Kidney (tissue), 22 donors: ENCODE measurements at regions of chr11 and their contacts with region 1.

Region 1: DNA sequence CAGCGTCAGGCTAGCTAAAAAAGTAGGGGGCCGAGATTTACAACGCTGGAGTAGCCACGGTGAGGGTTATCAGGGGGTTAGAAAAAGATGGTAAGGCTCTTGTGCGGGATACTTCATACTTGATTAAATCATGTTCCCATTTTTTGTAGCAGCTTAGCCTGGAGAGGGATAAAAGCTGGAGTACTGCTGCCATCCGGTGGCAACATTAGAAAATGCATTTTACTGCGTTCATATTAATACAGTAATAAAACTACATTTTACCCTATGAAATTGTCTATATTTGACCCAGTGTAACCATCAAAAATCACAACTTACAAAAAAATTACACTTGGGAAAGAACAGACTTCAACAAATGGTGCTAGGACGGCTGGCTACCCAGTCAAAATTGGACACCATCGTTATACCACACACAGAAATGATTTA is 17.3 kb downstream of the RPUSD4 start:
- DNase-seq: peak in 3 of 5 donors; percentile 48 to 69 (median 67)
- H3K4me3 ChIP-seq: no peak overlapping the region
- H3K27ac ChIP-seq: no peak overlapping the region
- H3K4me1 ChIP-seq: no peaks in the 10 kb centered on the region
- H3K27me3 ChIP-seq: no peaks in the 10 kb centered on the region
- CTCF ChIP-seq: peak; percentile 77

Region 2: GRCh38 chr11:125923012-125923579 is 271.0 kb before region 1 on chr11:
- intact Hi-C with region 1: loop called (anchors 5 kb)
- DNase-seq: peak in 4 of 5 donors; percentile 66 to 91 (median 78)
- H3K4me3 ChIP-seq: no peak overlapping the region
- H3K27ac ChIP-seq: no peak overlapping the region
- H3K4me1 ChIP-seq: no peaks in the 10 kb centered on the region
- H3K27me3 ChIP-seq: no peaks in the 10 kb centered on the region
- CTCF ChIP-seq: peak; percentile 82

Region 3: DNA sequence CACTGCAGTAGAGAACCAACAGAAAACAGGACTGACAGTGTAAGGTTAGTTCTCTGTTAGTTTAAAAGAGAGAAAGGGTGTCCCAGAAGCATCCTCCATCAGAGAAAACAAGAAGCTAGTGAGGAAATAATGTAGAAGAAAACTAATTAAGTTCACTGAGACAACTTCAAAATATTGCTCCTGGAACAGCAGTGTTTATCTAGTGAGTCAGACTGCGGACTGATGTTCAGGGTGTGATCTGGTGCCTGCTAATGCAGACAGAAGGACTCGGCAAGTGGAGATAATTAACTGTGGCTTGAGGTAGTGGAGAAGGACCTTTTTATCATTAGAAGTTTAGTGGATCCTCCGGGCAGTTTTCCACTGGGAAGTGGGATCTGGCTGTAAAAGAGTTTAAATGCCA is 186.9 kb before region 1 on chr11:
- intact Hi-C with region 1: no loop called
- DNase-seq: peak in 1 of 5 donors; percentile 14
- H3K4me3 ChIP-seq: no peak overlapping the region
- H3K27ac ChIP-seq: no peak overlapping the region
- H3K4me1 ChIP-seq: no peaks in the 10 kb centered on the region
- H3K27me3 ChIP-seq: no peaks in the 10 kb centered on the region
- CTCF ChIP-seq: no peak

Region 4: DNA sequence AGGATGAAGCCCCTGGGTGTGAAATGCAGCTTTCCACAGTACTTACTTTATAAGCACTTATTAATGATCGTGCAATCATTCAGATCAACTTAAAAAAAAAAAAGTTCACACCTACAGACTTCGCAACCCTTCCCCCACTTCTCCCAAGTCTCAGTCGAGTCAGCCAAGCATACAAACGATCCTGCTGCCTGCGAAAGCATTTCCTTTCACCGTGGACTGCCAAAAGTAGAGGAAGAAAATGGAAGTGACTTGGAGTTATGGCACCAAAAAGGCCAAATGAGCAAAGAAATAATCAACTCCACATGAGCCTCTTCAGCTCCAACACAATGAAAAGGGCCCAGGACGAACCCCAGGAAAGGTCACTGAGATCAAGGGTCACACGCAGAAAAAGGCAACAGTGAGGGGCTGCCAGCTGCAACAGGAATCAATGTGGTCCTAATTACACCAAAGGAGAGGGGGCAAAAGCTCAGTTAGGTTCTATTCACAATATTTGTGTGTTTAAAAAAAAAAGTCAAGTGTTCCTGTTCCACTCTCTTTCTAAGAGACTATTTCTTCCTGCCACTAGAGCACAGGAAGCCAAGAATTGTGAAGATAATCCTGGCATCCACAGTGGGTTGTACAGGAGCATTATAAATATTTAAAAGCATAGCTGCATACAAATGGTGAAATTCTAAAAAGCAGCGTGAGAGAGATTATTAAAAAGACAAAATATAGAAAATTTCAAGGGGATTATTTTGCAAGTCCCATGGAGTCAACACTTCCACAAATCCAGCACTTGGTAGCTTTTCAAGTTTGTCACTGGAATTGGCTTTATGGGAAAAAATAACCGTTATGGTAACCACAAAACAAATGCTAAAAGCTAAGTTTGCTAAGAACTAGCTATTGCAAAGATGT is 159.8 kb before region 1 on chr11:
- intact Hi-C with region 1: no loop called
- DNase-seq: peak in 4 of 5 donors; percentile 22 to 58 (median 36)
- H3K4me3 ChIP-seq: no peak overlapping the region
- H3K27ac ChIP-seq: no peak overlapping the region
- H3K4me1 ChIP-seq: peaks cover 0 to 3% (median 0%) of the 10 kb centered on the region in 3 donors
- H3K27me3 ChIP-seq: no peaks in the 10 kb centered on the region
- CTCF ChIP-seq: no peak